CD4-positive, alpha-beta memory T cell (primary cell): ENCODE measurements at regions of chr10 and their contacts with region 1.

Region 1: GRCh38 chr10:7484456-7485243 is 73.8 kb upstream of the SFMBT2 start:
- DNase-seq: peak; percentile 68 to 79 (median 74)
- H3K4me3 ChIP-seq: peak overlapping the region; percentile 25 to 33
- H3K4me3 Mint-ChIP-seq: peak overlapping the region; percentile 57 to 83 (median 75)
- H3K27ac ChIP-seq: peak overlapping the region; percentile 45
- H3K27ac Mint-ChIP-seq: peak overlapping the region; percentile 73 to 92 (median 86)
- H3K4me1 ChIP-seq: peaks cover 63% of the 10 kb centered on the region
- H3K4me1 Mint-ChIP-seq: peaks cover 51 to 85% (median 66%) of the 10 kb centered on the region in 4 donors
- H3K27me3 ChIP-seq: no peaks in the 10 kb centered on the region
- H3K27me3 Mint-ChIP-seq: no peaks in the 10 kb centered on the region

Region 2: DNA sequence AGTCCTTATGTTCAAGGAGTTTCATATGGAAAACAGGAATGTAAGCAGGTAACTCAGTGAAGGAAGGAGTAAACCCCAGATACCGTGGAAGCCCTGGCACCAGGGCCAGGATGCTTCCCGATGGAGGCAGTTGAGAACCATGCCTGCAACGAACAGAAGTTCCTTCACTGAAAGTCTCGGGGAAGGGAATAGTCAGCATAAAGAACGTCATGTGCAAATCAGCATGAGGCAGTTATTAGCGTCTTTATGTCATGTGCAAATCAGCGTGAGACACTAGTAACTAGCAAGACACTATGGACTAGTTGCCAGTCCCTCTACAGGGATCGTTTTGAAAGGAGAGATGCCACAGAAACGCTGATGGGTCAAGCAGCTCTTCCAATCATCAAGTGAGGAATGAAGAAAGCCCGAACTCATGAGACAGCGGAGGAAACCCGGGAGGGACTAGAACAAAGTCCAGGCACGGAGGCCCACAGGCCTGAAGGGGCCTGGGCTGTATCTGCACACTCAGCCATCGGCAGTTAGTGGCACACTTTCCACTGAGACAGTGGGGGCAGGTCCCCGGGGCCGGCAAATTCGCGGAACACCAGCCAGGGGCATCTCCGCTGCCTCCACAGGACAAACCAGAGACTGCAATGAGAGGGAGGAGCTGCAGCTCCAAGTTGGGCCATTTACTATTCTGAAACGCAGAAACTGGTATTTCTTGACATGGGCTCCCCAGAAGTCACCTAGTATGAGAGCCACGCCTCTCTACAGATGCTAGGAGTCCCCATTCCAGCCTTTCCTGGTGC is 183.4 kb before region 1 on chr10:
- CTCF ChIA-PET with region 1: no interaction called
- POLR2A ChIA-PET with region 1: no interaction called
- intact Hi-C with region 1: no loop called
- DNase-seq: no peak
- H3K4me3 ChIP-seq: no peak overlapping the region
- H3K4me3 Mint-ChIP-seq: no peak overlapping the region
- H3K27ac ChIP-seq: no peak overlapping the region
- H3K27ac Mint-ChIP-seq: no peak overlapping the region
- H3K4me1 ChIP-seq: peaks cover 15% of the 10 kb centered on the region
- H3K4me1 Mint-ChIP-seq: peaks cover 28 to 52% (median 43%) of the 10 kb centered on the region in 4 donors
- H3K27me3 ChIP-seq: no peaks in the 10 kb centered on the region
- H3K27me3 Mint-ChIP-seq: no peaks in the 10 kb centered on the region

Region 3: GRCh38 chr10:7471720-7472367 is 12.8 kb before region 1 on chr10:
- CTCF ChIA-PET with region 1: no interaction called
- POLR2A ChIA-PET with region 1: interaction called, 11 read pairs
- intact Hi-C with region 1: loop called (anchors 1 kb)
- DNase-seq: peak in 1 of 5 donors; percentile 10
- H3K4me3 ChIP-seq: peak overlapping the region in 1 of 2 donors; percentile 39
- H3K4me3 Mint-ChIP-seq: peak overlapping the region; percentile 75 to 90 (median 87)
- H3K27ac ChIP-seq: no peak overlapping the region
- H3K27ac Mint-ChIP-seq: peak overlapping the region; percentile 31 to 88 (median 81)
- H3K4me1 ChIP-seq: peaks cover 15% of the 10 kb centered on the region
- H3K4me1 Mint-ChIP-seq: peaks cover 16 to 30% (median 20%) of the 10 kb centered on the region in 4 donors
- H3K27me3 ChIP-seq: no peaks in the 10 kb centered on the region
- H3K27me3 Mint-ChIP-seq: no peaks in the 10 kb centered on the region

Region 4: GRCh38 chr10:7507887-7508726 is 23.5 kb after region 1 on chr10:
- CTCF ChIA-PET with region 1: interaction called, 4 read pairs
- POLR2A ChIA-PET with region 1: interaction called, 12 read pairs
- intact Hi-C with region 1: no loop called
- DNase-seq: peak in 4 of 5 donors; percentile 27 to 43 (median 31)
- H3K4me3 ChIP-seq: no peak overlapping the region
- H3K4me3 Mint-ChIP-seq: peak overlapping the region; percentile 24 to 86 (median 67)
- H3K27ac ChIP-seq: peak overlapping the region; percentile 1
- H3K27ac Mint-ChIP-seq: peak overlapping the region; percentile 81 to 98 (median 94)
- H3K4me1 ChIP-seq: peaks cover 34% of the 10 kb centered on the region
- H3K4me1 Mint-ChIP-seq: peaks cover 36 to 72% (median 44%) of the 10 kb centered on the region in 4 donors
- H3K27me3 ChIP-seq: no peaks in the 10 kb centered on the region
- H3K27me3 Mint-ChIP-seq: no peaks in the 10 kb centered on the region

Region 5: DNA sequence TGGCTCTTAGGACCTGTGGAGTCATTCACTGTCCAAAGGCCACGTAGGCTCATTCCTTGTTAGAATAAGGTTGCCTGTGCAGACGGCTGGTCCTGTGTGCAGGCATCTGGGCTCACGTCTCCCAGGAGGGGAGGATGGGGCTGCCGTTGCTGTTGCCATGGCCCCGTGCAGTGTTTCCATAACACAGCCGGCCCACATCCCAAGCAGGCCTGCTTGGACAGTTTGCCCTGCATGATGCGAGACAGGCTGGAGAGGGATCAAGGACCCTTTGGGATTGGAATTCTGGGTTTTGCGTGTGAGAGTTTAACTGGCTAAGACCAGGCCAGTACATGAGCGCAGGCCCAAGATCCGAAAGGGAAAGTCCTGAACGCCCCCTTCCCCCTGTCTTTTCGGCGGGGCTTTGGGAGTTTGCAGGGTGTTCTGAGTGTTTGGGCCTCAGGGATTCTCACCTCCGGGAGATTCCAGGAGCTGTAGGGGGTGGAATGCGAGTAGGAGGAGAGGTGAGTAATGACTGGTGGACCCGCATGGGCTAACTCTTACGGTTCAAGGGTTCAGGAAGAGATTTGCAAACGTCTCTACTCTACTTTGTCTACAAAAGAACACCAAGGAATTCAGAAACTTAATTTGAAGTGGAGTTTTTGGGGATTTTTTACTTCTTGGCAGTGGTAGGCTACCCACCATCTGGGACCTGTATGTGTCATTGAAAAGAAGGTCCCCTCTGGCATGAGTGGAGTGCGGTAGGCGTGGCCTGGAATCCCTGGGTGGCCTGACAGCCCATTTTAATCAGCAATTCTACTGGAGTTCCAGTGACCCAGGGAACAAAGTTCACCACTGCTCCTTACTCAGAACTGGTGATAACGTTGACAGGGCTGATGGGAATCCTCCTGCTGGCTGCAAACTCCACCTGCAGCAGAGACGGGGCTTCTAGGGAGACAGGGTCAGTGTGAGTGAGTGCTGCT is 56.8 kb after region 1 on chr10:
- CTCF ChIA-PET with region 1: no interaction called
- POLR2A ChIA-PET with region 1: no interaction called
- intact Hi-C with region 1: no loop called
- DNase-seq: no peak
- H3K4me3 ChIP-seq: no peak overlapping the region
- H3K4me3 Mint-ChIP-seq: no peak overlapping the region
- H3K27ac ChIP-seq: no peak overlapping the region
- H3K27ac Mint-ChIP-seq: peak overlapping the region in 1 of 7 donors; percentile 29
- H3K4me1 ChIP-seq: no peaks in the 10 kb centered on the region
- H3K4me1 Mint-ChIP-seq: peaks cover 8 to 10% (median 10%) of the 10 kb centered on the region in 4 donors
- H3K27me3 ChIP-seq: no peaks in the 10 kb centered on the region
- H3K27me3 Mint-ChIP-seq: no peaks in the 10 kb centered on the region

Region 6: GRCh38 chr10:8534096-8534495 is 1049.4 kb after region 1 on chr10:
- CTCF ChIA-PET with region 1: no interaction called
- POLR2A ChIA-PET with region 1: no interaction called
- intact Hi-C with region 1: no loop called
- DNase-seq: no peak
- H3K4me3 ChIP-seq: no peak overlapping the region
- H3K4me3 Mint-ChIP-seq: no peak overlapping the region
- H3K27ac ChIP-seq: no peak overlapping the region
- H3K27ac Mint-ChIP-seq: no peak overlapping the region
- H3K4me1 ChIP-seq: no peaks in the 10 kb centered on the region
- H3K4me1 Mint-ChIP-seq: peaks cover 0 to 5% (median 3%) of the 10 kb centered on the region in 4 donors
- H3K27me3 ChIP-seq: no peaks in the 10 kb centered on the region
- H3K27me3 Mint-ChIP-seq: peaks cover 0 to 7% of the 10 kb centered on the region in 2 donors